ENCODE measurements at regions of chr15 and their contacts with region 1.

Region 1: GRCh38 chr15:41022487-41023090 is 69.3 kb downstream of the CHAC1 start:
- DNase-seq: no peak
- ATAC-seq: peak; percentile 47 to 58

Region 2: DNA sequence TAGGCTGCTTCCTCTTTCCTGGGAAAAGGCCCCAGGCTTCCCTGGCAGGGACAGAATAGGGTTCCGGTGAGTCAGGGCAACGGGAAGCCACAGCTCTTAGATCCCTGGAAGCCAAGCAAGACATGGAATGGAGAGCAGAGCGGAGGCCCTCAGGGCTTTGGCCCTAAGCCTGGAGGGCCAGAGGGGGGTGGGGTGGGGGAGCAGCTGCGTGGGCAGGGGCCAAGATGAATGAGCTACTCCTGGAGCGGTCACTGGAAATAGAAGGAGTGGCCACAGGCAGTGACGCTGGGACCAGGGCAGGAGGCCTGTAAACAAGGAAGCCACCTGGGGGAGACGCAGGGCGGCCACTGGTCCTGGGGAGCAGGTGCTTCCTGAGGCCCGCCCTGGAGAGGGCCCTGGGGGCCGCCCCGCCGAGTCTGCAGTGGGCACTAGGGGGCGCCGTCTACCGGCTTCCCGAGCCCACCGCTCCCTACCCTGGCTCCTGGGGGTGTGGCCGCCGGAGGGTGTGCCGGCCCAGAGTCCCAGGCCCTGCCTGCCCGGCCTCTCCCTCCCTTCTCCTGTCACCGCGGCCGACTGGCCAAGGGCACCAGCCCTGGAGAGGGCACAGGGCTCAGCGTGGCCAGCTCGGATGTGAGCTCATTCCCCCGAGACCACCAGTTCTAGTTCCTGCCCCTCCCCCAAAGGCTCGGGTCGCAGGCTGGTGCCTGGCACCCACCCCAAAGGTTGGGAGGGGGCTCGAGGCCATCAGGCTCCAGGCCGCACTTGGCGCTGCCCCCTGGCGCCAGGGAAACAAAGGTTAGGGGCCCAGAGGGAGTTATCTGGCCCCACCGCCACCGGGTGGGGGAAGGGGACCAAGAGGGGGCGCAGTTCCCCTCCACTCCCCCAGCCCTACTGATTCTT is 116.2 kb before region 1 on chr15:
- intact Hi-C with region 1: loop called (anchors 1 to 2 kb)
- DNase-seq: peak; percentile 91
- ATAC-seq: peak; percentile 80 to 85

Region 3: GRCh38 chr15:40941528-40942336 is 80.9 kb before region 1 on chr15:
- intact Hi-C with region 1: loop called (anchors 5 to 10 kb)
- DNase-seq: peak; percentile 85
- ATAC-seq: peak; percentile 84 to 85

Region 4: GRCh38 chr15:41180206-41180789 is 157.7 kb after region 1 on chr15:
- intact Hi-C with region 1: loop called (anchors 10 kb)
- DNase-seq: no peak
- ATAC-seq: no peak